ENCODE measurements at regions of chr2 and their contacts with region 1.

Region 1: DNA sequence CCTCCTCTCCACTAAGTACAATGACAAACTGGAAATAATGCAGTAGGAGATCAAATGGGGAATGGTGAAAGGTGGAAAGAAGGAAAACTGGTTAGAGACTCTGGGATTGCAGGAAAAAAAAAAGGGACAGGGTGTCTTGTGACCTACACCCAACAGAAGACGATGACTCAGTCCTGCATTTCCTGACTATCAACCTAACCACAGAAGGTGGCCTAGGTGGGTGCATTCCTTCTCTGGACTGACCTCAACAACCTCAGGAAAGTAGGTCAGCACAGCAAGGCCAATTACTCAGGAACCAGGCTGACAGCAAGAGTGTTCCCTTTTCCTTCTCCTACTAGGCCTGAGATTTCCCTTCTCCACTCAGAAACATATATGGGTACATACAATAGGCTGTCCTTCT is 1386.4 kb upstream of the ZEB2 start:
- DNase-seq: peak; percentile 79 to 91
- H3K4me3 ChIP-seq: peak overlapping the region; percentile 22; the same call in 1 of the 2 replicates
- H3K27ac ChIP-seq: peak overlapping the region; percentile 67
- H3K4me1 ChIP-seq: peaks cover 42% of the 10 kb centered on the region
- H3K27me3 ChIP-seq: no peaks in the 10 kb centered on the region
- CTCF ChIP-seq: no peak

Region 2: GRCh38 chr2:145687442-145688134 is 218.8 kb before region 1 on chr2:
- CTCF ChIA-PET with region 1: no interaction called
- POLR2A ChIA-PET with region 1: no interaction called
- intact Hi-C with region 1: loop called (anchors 1 kb)
- DNase-seq: no peak
- H3K4me3 ChIP-seq: no peak overlapping the region
- H3K27ac ChIP-seq: 0 out of 2 replicates have a peak overlapping the region, but pooled peaks have one; percentile 6
- H3K4me1 ChIP-seq: peaks cover 36% of the 10 kb centered on the region
- H3K27me3 ChIP-seq: no peaks in the 10 kb centered on the region
- CTCF ChIP-seq: no peak

Region 3: DNA sequence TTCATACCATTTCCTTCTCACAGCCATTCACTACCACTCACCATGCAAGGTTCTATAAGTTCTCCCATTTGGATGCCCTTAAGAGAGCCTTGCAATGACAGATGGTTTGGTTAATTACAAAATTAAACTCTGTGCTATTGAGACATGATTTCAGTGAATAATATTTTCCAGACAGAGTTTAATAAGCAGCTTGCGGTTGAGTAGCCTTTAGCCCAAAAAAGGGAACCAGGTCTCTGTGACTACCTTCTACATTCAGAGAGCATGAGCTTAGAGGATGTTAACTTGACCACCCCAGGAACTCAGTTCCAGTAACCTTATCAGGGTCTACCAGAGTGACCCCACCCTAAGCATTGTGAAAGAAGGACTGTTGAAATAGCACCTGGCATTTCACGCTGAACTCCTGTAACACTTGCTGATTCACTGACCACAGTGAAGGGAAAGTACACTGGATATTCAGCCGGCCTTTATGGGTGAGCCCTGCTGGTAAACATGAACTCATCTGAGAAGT is 213.3 kb before region 1 on chr2:
- CTCF ChIA-PET with region 1: no interaction called
- POLR2A ChIA-PET with region 1: no interaction called
- intact Hi-C with region 1: loop called (anchors 2 kb)
- DNase-seq: peak; percentile 69 to 91
- H3K4me3 ChIP-seq: no peak overlapping the region
- H3K27ac ChIP-seq: peak overlapping the region; percentile 98
- H3K4me1 ChIP-seq: peaks cover 22% of the 10 kb centered on the region
- H3K27me3 ChIP-seq: no peaks in the 10 kb centered on the region
- CTCF ChIP-seq: no peak

Region 4: DNA sequence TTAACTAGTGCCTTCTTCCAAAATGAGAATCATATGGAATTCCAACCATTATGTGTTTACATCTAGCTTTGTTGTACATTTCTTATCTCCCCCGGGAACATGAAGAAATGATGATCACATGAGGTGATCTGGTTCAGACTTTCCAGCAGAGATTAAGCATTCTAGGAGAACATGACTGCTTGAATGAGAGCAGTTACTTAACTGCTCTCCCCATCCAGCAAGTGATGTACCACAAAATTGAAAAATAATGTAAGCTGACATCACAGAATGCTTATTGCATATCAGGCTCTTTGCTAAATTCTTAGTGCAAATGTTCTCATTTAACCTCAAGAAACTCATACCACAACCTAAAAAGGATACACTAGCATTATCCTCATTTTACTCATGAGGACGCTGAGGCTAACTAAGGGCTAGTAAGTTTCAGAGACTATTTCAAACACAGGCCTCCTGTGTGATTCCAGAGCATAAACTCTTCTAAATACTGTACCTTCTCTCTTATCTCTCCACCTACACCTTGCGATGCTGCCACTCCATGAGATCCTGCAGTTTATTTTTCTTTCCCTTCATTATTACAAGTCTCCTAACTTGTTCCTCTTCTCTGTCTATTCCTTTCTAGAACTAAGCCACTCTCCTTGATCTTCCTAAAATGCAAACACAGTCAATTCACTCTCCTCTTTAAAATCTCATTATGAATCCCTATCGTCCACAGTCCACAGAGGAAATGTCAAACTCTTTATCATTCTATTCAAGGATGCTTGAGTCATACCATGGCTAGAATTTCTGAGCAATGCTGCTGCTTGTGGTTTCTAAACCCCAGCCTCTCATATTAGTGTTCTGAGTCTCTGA is 161.6 kb before region 1 on chr2:
- CTCF ChIA-PET with region 1: no interaction called
- POLR2A ChIA-PET with region 1: no interaction called
- intact Hi-C with region 1: no loop called
- DNase-seq: no peak
- H3K4me3 ChIP-seq: no peak overlapping the region
- H3K27ac ChIP-seq: no peak overlapping the region
- H3K4me1 ChIP-seq: no peaks in the 10 kb centered on the region
- H3K27me3 ChIP-seq: no peaks in the 10 kb centered on the region
- CTCF ChIP-seq: no peak

Region 5: DNA sequence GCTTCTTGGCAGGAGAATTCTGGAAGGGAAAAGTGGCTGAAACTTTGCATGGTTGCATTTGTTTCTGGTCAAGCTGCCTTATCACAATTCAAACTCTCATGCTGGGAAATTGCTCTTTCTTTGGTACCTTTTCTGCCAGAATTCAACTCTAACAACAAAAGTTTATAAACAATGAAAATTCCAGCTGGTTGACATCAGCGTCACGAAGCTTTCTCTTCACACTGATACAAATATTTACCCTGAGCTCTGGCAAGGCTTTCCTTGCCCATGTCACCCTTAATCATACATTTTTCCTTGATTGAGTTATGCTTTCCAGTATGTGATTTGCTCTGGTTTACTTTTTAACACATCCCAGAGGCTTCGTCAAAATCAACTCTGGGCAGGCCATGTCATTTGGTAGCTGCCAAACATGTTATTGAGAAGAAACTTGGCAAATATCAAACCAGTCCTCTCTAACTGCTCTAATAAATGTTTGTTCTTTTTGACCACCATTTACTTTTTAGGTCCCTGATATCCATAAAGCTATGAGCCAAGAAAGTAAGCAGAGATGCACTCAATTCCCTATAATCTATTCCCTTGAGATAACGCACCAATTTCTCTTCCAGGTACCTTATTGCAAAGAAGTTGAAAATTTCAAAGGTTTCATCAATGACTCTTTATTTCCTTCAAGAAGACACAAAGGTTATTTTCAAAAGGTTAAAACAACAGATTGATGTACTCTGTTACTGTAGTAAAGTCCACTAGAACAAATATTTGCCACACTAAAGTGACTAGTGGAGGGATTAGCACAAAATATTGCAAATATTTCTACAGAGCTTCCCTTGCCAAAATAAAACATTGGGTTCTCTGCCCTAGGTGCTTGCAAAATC is 145.3 kb before region 1 on chr2:
- CTCF ChIA-PET with region 1: no interaction called
- POLR2A ChIA-PET with region 1: no interaction called
- intact Hi-C with region 1: loop called (anchors 5 kb)
- DNase-seq: peak; percentile 28 to 38
- H3K4me3 ChIP-seq: no peak overlapping the region
- H3K27ac ChIP-seq: no peak overlapping the region
- H3K4me1 ChIP-seq: no peaks in the 10 kb centered on the region
- H3K27me3 ChIP-seq: no peaks in the 10 kb centered on the region
- CTCF ChIP-seq: no peak

Measured in PC-9 (cell line).